GM10248 (cell line): ENCODE measurements at regions of chr2 and their contacts with region 1.

Region 1: DNA sequence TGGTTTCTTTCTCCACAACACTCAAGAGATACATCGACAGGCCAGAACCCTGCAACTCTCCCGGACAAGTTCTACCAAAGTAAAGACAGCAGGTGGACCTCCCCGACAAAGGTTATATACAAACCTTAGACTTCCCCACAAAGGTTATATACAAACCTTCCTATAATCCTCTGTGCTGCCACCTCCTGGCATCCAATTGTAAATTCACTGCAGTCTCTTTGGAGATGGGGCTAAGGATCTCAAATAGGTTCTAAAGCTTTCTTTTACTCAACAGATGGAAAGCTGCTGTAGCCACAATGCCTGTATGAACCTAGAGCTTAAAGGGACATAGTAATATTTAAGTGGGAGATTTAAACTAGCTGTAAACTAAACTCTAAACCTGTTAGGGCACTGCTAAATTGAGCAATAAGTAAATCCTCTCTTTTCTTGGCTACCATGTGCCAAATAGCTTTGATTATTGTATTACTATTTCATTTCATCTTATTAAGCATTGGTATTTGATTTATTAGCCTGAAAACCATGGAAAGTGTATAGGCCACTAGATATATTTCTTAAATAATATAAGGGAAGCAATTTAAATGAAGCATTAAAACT is 9.8 kb upstream of the MREG start:
- DNase-seq: peak; percentile 60
- CTCF ChIP-seq: peak; percentile 74

Region 2: GRCh38 chr2:215949991-215950404 is 73.2 kb before region 1 on chr2:
- CTCF ChIA-PET with region 1: interaction called, 43 read pairs
- POLR2A ChIA-PET with region 1: no interaction called
- DNase-seq: peak; percentile 41
- CTCF ChIP-seq: peak; percentile 38

Region 3: GRCh38 chr2:215969131-215969841 is 53.9 kb before region 1 on chr2:
- CTCF ChIA-PET with region 1: interaction called, 31 read pairs
- POLR2A ChIA-PET with region 1: no interaction called
- DNase-seq: no peak
- CTCF ChIP-seq: no peak

Region 4: DNA sequence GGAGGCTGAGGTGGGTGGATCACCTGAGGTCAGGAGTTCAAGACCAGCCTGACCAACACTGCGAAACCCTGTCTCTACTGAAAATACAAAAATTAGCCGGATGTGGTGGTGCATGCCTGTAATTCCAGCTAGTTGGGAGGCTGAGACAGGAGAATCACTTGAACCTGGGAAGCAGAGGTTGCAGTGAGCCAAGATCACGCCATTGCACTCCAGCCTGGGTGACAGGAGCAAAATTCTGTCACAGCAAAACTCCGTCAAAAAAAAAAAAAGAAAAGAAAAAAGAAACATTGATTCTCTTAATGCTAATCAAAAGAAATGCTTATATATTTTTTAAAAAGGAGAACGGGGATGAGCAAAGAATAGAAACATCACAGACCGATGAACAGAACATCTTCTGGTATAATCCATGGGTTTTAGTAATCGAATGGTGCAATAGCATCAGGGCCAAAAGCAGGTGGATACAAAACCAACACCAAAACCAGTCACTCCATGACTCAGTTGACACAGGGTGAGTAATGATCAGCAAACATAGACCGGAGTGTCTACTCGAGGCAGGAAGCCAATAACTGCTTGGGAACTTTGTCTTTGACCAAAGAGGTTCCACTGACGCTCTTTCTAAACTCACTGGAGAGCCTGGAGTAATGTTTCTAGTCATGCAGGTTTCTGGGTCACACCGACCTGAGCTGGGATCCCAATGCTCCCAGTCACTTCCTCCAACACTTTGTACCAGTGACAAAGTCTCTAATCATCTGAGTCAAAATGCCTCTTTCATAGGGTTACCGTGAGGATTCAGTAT is 40.9 kb before region 1 on chr2:
- CTCF ChIA-PET with region 1: interaction called, 10 read pairs
- POLR2A ChIA-PET with region 1: no interaction called
- DNase-seq: no peak
- CTCF ChIP-seq: no peak

Region 5: GRCh38 chr2:216006164-216006663 is 16.9 kb before region 1 on chr2:
- CTCF ChIA-PET with region 1: interaction called, 54 read pairs
- POLR2A ChIA-PET with region 1: no interaction called
- DNase-seq: peak; percentile 39
- CTCF ChIP-seq: no peak

Region 6: GRCh38 chr2:216044883-216045486 is 21.8 kb after region 1 on chr2:
- CTCF ChIA-PET with region 1: interaction called, 21 read pairs
- POLR2A ChIA-PET with region 1: no interaction called
- DNase-seq: peak; percentile 31
- CTCF ChIP-seq: no peak

Region 7: GRCh38 chr2:216632952-216633615 is 609.9 kb after region 1 on chr2 and contains the start of gene IGFBP2:
- CTCF ChIA-PET with region 1: no interaction called
- POLR2A ChIA-PET with region 1: no interaction called
- DNase-seq: peak; percentile 70
- CTCF ChIP-seq: no peak